Posterior cingulate gyrus (tissue), 11 donors: ENCODE measurements at regions of chr11 and their contacts with region 1.

Region 1: DNA sequence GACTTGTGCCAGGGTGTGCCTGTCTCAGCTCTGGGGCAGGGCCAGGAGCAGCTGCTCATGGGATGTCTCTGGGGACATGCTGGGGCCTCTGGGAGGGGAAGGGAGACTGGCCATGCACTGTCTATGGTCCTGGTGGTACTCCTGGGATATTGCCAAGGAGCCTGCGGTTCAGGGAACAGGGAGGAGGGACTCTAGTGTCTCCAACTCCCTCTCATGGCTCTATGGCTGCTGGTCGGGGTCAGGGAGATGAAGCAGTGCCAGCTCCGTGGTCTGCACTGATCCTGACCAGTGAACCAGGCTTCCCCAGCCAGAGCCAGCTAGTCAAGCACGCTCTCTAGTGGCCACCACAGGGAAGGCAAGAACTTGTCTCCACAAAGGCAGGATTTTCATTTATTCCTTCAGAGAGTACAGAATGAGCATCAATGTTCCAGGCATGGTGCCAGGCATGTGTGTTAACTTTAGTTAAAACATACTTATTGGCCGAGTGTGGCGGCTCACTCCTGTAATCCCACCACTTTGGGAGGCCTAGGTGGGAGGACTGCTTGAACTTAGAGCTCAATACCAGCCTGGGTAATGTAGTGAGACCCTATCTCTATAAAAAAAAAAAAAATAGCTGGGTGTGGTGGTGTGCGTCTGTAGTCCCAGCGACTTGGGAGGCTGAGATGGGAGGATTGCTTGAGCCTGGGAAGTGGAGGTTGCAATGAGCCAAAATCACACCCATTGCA is 2.5 kb upstream of the BEST1 start:
- DNase-seq: peak; percentile 74 to 98 (median 90)

Region 2: DNA sequence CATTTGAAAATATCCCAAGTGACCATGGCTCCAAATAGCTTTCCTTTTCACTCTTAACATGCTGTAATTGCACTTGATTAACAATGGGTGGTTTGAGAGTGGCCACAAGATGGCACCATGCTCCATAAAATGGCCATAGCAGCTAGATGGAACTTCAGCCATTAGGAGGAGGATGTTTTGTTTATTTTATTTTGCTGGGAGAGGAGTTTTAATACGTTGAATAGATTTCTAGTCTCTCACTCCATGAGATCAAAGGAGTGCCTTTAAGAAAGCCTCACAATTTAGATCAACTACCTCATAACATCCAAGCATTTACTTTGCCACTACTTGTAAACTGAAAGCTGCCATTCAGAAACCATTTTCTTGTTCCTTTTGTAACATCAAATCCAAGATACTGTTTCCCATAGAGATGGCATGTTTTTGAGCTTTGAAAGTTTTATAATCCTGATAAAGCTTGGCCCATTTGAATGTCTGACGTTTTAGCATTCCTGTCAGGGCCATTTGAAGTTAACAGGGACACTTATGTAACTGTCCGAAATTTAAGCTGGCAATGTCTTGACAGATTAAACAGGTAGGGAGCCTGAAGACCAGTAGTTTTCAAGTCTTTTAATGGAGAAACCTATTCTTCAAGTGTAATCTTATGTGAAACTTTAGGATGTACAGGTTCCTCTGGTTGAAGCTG is 150.2 kb before region 1 on chr11:
- intact Hi-C with region 1: loop called (anchors 2 kb)
- DNase-seq: peak in 6 of 10 donors; percentile 80 to 94 (median 84)

Region 3: DNA sequence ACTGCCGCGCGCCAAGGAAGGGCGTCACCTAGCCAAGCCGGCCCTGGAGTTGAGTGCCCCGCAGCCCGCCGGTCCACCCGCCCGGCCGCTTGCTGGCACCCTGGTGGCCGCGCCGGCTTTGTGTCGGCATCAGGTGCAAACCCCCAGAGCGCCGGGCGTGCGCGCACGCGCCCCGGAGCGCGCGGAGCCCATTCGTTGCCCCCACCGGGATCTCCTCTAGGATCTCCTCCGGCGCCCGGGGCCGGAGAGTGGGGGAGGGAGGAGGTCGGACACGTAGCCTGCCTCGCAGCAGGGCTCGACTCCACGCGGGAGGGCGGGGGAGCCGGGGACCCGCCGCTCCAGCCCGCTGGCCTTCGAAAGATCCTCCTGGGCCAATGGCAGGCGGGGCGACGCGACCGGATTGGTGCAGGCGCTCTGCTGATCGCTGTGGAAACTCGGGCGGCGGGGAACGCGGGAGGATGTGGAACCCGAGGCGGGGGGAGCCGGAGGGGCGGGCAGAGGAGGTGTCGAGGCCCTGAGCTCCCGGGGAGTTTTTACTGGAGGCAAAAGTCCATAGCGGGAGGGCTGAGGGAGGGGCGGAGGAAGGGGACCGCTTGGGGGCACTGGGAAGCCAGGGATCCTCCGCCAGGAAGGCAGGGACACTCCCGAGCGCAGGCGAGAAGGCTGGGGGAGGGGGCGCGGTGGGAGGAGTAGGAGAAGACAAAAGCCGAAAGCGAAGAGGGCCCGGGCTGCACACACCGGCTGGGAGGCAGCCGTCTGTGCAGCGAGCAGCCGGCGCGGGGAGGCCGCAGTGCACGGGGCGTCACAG is 119.9 kb before region 1 on chr11 and contains the start of gene FADS2:
- intact Hi-C with region 1: no loop called
- DNase-seq: peak; percentile 86 to 99 (median 98)

Region 4: DNA sequence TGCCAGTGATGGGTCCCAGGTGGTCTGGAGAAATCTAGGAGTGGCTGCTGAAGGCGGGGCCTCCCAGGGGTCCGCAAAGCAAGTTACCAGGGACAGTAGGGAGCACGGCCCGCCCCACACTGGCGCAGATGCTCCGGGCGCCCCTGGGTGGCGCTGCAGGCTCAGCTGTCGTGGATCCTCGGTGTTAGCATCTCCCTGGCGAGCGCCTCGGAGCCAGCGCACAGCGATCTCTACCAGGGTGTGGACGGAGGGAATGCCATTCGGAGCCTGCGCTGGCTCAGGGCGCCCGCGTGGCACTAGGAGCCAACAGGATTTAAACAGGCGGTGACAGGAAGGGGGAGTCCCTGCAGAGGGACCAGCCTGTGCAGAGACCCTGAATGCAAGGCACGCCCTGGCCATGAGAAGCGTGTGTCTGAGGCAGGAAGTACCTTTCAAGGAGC is 76.5 kb before region 1 on chr11:
- intact Hi-C with region 1: loop called (anchors 1 kb)
- DNase-seq: peak; percentile 59 to 98 (median 86)

Region 5: DNA sequence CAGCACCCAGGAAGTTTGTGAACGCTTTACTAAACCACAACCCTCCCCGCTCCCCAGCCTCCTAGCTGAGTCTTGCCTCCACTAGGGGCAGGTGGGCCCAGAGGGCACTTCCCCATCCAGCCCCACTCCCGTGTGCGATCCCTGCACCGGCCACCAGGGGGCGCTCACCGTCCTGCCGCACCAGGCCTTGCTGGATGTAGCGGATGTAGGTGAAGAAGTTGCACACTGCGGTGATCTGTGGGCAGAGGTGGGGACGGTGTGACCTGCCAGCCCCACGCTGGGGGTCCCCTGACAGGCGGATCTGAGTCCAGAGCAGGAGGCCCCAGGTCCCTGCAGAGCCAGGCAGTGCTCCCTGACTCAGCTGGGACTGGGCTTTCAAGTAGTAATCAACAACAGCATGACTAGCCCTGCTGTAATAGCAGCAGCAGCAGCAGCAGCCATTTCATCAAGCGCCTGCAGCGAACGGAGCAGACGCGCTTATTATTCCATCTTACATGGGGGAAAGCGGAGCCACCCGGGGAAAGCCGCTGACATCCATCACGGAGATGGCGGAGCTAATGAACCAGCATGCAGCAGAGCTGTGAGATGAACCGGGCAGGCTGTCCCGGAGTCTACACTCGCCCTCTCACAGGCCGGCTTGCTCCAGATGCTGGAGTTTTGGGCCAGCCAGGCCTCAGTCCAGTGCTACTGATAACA is 48.4 kb before region 1 on chr11:
- intact Hi-C with region 1: loop called (anchors 1 kb)
- DNase-seq: peak; percentile 56 to 95 (median 80)

Region 6: GRCh38 chr11:61967116-61967923 is 19.7 kb after region 1 on chr11 and contains the start of gene FTH1:
- intact Hi-C with region 1: loop called (anchors 2 kb)
- DNase-seq: peak; percentile 90 to 99 (median 94)

Region 7: DNA sequence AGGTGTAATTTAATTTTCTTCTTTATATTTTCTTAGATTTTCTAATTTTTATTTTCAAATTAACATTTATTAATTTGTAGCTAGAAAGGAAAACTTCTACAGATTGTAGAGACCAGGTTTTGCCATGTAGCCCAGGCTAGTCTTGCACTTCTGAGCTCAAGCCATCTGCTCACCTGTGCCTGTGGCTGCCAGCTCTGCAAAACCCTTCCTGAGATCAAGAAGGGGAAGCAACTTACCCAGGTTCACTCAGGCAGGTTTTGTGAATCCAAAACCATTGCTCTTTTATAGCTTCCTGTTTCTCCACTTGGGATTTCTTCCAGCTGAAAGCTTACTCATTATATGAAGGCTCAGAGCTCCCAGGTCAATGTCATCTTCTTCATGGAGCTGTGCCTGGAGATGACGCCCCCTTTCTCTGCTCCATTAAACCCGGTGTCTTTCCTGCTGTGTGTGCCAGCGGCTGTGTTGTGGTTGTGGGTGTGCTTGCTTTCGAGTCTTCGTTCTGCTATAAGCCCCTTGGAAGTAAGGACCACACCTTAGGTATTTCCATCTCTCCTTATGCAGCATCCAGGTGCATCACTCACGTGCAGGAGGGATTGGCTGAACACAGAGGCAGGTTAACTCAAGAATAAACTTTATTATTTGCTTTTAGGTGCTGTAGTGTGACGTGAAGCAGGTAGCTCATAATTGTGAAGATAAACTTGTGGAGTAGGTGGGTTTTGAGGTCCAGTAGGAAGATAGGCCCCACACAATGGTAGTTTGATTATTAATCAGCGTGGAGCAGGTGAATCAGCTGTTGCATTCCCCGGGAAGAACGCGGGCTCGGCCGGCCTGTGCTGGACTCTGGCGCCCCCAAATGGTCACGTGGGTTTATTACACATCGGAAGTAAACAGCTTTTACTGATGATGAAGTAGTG is 134.0 kb after region 1 on chr11:
- intact Hi-C with region 1: loop called (anchors 5 kb)
- DNase-seq: peak; percentile 71 to 98 (median 91)